HEK293T (cell line): ENCODE measurements at regions of chr6 and their contacts with region 1.

Region 1: GRCh38 chr6:136289579-136290409 is at the start of gene BCLAF1:
- DNase-seq: peak; percentile 97

Region 2: GRCh38 chr6:135497412-135498269 is 792.2 kb before region 1 on chr6 and contains the start of gene AHI1:
- CTCF ChIA-PET with region 1: no interaction called
- POLR2A ChIA-PET with region 1: interaction called, 10 read pairs
- DNase-seq: peak; percentile 97

Region 3: DNA sequence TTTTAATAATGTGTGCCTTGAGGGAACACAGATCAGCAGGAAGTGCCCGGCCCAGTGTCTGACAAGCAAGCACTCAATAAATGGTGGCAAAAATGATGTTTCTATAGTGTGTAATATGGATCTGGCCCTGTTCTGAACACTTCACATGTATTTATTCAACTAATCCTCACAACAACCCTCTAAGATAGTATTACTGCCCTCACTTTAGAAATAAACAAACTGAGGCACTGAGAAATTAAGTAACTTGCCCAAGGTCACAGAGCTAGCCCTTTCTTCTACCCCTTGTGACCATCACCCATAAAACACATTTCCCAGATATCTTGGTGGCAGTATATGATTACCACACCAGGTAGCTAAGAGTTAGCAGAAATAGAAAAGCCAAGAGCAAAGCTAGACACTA is 26.9 kb before region 1 on chr6:
- CTCF ChIA-PET with region 1: no interaction called
- POLR2A ChIA-PET with region 1: interaction called, 11 read pairs
- DNase-seq: no peak

Region 4: GRCh38 chr6:136306466-136306865 is 16.7 kb after region 1 on chr6:
- CTCF ChIA-PET with region 1: no interaction called
- POLR2A ChIA-PET with region 1: interaction called, 30 read pairs
- DNase-seq: no peak

Region 5: DNA sequence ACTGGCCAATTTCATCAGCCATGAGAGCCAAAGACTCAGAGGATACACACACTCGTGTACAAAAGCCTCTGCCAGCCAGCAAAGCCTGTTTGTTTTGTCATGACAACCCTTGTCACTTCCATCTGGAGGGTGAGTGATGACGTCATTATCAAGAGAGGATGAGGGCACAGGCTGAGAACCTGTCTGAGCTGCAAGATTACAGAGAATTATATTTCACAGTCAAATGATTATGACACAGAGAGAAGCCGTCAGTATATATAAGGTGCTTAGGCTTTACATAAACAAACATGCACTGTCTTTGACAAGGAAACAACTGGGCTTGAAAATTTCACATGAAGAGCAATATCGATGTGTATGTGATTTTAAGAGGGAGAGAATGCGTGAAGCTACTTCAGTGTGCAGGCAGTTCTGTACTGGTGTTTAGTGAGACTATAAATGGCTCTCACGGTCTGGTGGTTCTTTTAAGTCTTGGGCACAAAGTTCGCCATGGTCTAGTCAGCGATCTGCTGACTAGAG is 36.3 kb after region 1 on chr6:
- CTCF ChIA-PET with region 1: interaction called, 4 read pairs
- POLR2A ChIA-PET with region 1: interaction called, 46 read pairs
- DNase-seq: peak; percentile 46

Region 6: GRCh38 chr6:136550330-136551071 is 260.7 kb after region 1 on chr6 and contains the start of gene MAP7:
- CTCF ChIA-PET with region 1: interaction called, 4 read pairs
- POLR2A ChIA-PET with region 1: interaction called, 12 read pairs
- DNase-seq: peak; percentile 84